MCF 10A (cell line): ENCODE measurements at regions of chr7 and their contacts with region 1.

Region 1: DNA sequence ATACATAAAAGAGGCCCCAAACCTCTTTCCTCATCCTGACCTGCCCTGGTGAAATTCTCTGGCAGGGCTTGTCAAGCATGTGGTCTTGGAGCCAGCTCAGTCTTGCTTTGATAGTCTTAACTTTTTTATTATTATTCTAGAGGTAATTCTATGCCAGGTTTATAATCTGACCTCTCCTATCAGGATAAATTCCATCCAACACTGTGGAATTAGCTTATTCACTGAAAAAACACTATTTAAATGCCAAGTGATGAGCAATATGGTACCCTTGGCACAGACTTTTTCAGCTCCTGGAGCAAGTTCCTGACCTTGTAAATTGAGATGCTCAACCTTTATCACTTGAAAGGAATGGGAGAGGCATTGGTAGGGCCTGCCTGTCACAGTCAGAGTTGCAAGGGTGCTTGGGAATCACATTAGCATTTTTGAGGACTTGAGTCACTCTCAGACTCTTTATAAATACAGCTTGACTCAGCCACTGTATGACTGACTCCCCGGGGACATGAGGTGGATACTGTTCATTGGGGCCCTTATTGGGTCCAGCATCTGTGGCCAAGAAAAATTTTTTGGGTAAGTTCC is at the start of gene CPA4:
- DNase-seq: peak; percentile 95
- H3K4me3 Mint-ChIP-seq: peak within 1 kb of the TSS; percentile 47
- H3K27ac Mint-ChIP-seq: peak within 1 kb of the TSS; percentile 80
- H3K4me1 Mint-ChIP-seq: peaks cover 47% of the 10 kb centered on the region
- H3K27me3 Mint-ChIP-seq: no peaks in the 10 kb centered on the region
- CTCF ChIP-seq: no peak
- total RNA-seq, gene CPA4: 1.8 and 4.3 TPM in 2 replicates

Region 2: GRCh38 chr7:130205084-130205947 is 87.5 kb before region 1 on chr7 and contains the start of gene TMEM209:
- CTCF ChIA-PET with region 1: no interaction called
- POLR2A ChIA-PET with region 1: interaction called, 15 read pairs
- intact Hi-C with region 1: no loop called
- DNase-seq: peak; percentile 97
- H3K4me3 Mint-ChIP-seq: peak within 1 kb of the TSS; percentile 98
- H3K27ac Mint-ChIP-seq: peak within 1 kb of the TSS; percentile 99
- H3K4me1 Mint-ChIP-seq: peaks cover 12% of the 10 kb centered on the region
- H3K27me3 Mint-ChIP-seq: no peaks in the 10 kb centered on the region
- CTCF ChIP-seq: no peak
- total RNA-seq, gene TMEM209: 38.3 and 45.3 TPM in 2 replicates

Region 3: DNA sequence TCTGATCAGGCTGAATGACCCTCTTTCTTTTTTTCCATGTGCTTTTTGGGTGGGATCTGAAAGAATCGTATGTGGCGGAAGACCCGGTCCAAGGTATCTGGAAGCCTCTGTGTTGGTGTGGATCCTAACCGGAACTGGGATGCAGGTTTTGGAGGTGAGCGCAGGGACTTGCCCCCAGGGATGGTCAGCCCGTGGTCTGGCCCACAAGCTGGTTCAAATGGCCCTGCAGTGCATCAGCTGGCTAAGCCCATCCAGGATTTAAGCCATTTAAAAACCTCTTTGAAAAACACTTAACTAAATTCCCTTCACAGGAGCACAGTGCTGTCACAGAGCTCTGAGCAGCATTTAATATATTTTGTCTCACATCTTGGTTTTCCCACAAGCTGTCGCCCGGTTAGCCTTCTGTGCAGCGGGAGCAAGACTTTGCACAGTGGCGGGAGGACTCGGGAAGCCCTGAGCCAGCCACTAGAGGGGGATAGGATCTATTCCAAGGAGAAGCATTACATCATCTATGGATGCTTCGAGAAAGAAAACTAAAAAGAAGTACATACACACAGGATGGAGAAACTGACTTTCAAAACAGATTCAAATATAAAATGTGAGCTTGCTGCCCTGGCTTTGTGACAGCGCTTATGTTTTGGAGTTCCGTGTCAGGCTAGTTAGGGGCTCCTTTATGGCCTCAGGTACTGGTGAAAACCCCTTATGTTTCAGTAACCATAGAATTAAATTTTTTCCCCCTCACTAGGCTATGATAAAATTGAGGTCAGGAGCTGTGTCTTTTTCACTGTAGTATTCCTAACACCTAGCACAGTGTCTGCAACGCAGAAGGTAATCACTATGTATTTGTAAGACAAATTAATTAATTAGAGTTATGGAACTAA is 14.8 kb before region 1 on chr7:
- CTCF ChIA-PET with region 1: interaction called, 3 read pairs
- POLR2A ChIA-PET with region 1: interaction called, 40 read pairs
- intact Hi-C with region 1: no loop called
- DNase-seq: peak; percentile 55
- H3K4me3 Mint-ChIP-seq: no peak overlapping the region
- H3K27ac Mint-ChIP-seq: no peak overlapping the region
- H3K4me1 Mint-ChIP-seq: peaks cover 52% of the 10 kb centered on the region
- H3K27me3 Mint-ChIP-seq: no peaks in the 10 kb centered on the region
- CTCF ChIP-seq: no peak

Region 4: DNA sequence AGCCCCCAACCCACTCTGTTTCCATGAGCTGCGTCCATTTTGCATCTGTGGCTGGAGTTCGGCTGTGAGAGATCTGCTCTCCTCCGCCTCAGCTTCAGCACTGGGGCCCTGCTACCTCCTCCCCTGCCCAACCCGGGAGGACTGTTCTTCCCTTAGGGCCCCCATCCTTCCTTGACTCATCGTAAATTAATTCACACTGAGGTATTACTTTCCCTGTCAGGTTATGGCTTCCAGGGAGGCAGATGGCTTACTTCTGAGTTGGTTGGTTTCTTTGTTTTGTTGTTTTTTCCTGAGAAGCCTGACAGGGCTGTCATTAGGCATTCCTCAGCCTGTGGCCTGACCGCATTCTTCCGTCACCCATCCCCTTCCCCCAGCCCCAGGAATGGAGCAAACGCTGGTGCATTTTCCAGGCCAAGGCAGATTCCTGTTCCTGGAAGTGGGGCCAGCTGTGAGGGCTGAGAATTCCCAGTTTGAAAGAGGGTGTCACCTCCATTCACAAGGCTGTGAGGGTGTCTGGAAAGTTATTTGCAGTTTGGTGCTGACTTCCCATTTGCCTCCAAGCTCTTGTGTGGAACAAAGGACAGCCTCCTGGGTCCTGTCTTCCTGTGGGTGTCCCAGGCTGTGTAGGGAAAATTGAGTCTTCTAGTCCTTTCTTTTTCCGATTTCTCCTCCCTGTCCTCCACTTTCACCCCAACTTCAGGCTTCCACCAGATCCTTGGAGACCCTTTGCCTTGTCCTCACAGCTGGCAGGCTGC is 63.5 kb after region 1 on chr7:
- CTCF ChIA-PET with region 1: interaction called, 11 read pairs
- POLR2A ChIA-PET with region 1: interaction called, 26 read pairs
- intact Hi-C with region 1: loop called (anchors 2 kb)
- DNase-seq: peak; percentile 95
- H3K4me3 Mint-ChIP-seq: peak overlapping the region; percentile 50
- H3K27ac Mint-ChIP-seq: peak overlapping the region; percentile 68
- H3K4me1 Mint-ChIP-seq: peaks cover 53% of the 10 kb centered on the region
- H3K27me3 Mint-ChIP-seq: no peaks in the 10 kb centered on the region
- CTCF ChIP-seq: no peak

Region 5: GRCh38 chr7:130363026-130363798 is 70.4 kb after region 1 on chr7:
- CTCF ChIA-PET with region 1: interaction called, 11 read pairs
- POLR2A ChIA-PET with region 1: interaction called, 10 read pairs
- intact Hi-C with region 1: no loop called
- DNase-seq: peak; percentile 97
- H3K4me3 Mint-ChIP-seq: peak overlapping the region; percentile 43
- H3K27ac Mint-ChIP-seq: peak overlapping the region; percentile 83
- H3K4me1 Mint-ChIP-seq: peaks cover 31% of the 10 kb centered on the region
- H3K27me3 Mint-ChIP-seq: no peaks in the 10 kb centered on the region
- CTCF ChIP-seq: no peak

Region 6: DNA sequence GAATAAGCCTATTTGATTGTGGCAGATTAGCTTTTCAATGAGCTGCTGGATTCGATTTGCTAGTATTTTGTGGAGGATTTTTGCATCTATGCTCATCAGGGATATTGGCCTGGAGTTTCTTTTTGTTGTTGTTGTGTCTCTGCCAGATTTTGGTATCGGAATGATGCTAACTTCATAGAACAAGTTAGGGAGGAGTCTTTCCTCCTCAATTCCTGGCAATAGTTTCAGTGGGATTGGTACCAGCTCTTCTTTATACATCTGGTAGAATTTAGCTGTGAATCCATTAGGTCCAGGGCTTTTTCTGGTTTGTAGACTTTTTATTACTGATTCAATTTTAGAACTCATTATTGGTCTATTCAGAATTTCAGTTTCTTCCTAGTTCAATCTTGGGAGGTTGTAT is 484.7 kb after region 1 on chr7:
- CTCF ChIA-PET with region 1: no interaction called
- POLR2A ChIA-PET with region 1: no interaction called
- intact Hi-C with region 1: no loop called
- DNase-seq: no peak
- H3K4me3 Mint-ChIP-seq: no peak overlapping the region
- H3K27ac Mint-ChIP-seq: no peak overlapping the region
- H3K4me1 Mint-ChIP-seq: no peaks in the 10 kb centered on the region
- H3K27me3 Mint-ChIP-seq: peaks cover 20% of the 10 kb centered on the region
- CTCF ChIP-seq: no peak